ENCODE measurements at regions of chr11 and their contacts with region 1.

Region 1: DNA sequence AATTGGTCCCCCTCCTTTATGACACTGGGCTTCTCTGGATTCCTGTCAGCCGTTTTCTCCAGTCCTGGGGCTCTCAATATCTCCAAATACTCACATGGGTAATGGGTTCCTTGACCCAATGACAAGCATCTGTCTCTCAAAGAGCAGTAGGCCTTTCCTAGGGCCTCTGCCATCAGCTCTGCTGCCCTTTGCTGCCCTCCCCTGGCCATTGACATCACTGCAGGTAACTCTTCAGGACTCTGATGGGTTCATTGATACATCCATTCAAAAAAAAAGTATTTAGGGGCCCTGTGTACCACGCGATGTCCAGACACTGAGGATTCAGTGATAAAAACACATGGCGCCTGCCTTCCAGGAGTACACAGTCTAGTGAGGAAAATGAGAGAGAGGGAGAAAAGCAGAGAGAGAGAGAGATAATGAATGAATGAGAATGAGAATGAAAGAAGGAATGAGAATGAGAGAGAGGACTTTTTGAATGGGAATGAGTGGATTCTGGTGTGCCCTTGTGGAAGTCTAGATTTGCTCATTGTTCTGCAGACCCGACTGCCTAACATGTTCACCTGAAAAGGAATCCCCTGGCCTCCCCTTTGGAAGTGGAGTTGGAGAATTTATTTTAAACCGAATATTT is 42.6 kb upstream of the OLFML1 start:
- DNase-seq: peak; percentile 40
- H3K4me3 ChIP-seq: no peak overlapping the region
- H3K27ac ChIP-seq: no peak overlapping the region
- H3K4me1 ChIP-seq: peaks cover 7% of the 10 kb centered on the region
- H3K27me3 ChIP-seq: no peaks in the 10 kb centered on the region
- CTCF ChIP-seq: peak; percentile 96

Region 2: GRCh38 chr11:6988506-6988905 is 454.2 kb before region 1 on chr11:
- CTCF ChIA-PET with region 1: no interaction called
- dilution Hi-C with region 1: no loop called
- in situ Hi-C with region 1: no loop called
- intact Hi-C with region 1: no loop called
- DNase-seq: no peak
- H3K4me3 ChIP-seq: no peak overlapping the region
- H3K27ac ChIP-seq: no peak overlapping the region
- H3K4me1 ChIP-seq: no peaks in the 10 kb centered on the region
- H3K27me3 ChIP-seq: no peaks in the 10 kb centered on the region
- CTCF ChIP-seq: no peak

Region 3: DNA sequence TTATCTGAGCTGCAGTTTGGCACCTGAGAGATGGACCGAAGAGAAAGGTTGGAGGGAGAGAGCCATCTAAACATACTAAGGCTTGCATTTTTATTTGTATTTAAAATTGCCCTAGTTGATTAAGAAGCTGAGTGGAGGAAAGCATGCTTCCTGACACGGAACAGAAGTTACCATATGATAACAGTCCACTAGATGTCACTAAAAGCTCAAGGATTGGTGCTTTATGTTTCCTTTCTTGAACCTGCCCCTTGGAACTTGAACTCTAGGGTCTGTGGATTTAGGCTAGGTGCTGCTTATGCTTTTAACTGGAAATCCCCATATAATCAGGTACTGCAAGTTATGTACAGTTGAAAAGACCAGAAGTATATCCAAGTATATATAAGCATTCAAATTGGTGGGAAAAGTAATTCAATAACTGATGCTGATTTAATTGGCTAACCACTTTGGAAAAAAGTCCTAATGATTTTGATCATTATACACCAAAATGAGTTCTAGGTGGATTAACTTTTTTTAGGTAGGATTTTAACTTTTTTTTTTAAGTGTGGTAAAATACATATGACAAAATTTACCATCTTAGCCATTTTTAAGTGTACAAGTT is 344.4 kb before region 1 on chr11:
- CTCF ChIA-PET with region 1: no interaction called
- dilution Hi-C with region 1: no loop called
- in situ Hi-C with region 1: loop called (anchors 25 kb)
- intact Hi-C with region 1: loop called (anchors 1 kb)
- DNase-seq: peak; percentile 25
- H3K4me3 ChIP-seq: no peak overlapping the region
- H3K27ac ChIP-seq: no peak overlapping the region
- H3K4me1 ChIP-seq: no peaks in the 10 kb centered on the region
- H3K27me3 ChIP-seq: no peaks in the 10 kb centered on the region
- CTCF ChIP-seq: peak; percentile 61 to 68

Region 4: DNA sequence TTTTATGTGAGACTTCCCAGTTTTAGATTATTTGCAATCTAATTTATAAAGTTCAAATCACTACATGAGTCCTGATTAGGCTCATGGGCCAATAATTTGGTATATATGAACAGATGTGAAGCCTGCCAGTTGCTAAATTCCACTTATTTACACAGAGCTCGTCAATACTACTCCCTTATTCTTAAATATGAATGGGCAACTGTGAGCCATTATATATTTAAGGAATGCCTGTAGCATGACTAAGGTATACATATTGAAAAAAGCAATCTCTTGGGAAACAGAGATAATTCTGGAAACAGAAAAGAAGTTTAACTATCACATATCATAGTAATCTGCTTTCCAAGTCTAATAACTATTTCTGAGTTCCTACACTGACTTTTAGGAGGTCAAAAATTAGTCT is 326.9 kb before region 1 on chr11:
- CTCF ChIA-PET with region 1: no interaction called
- dilution Hi-C with region 1: no loop called
- in situ Hi-C with region 1: loop called (anchors 25 kb)
- intact Hi-C with region 1: no loop called
- DNase-seq: no peak
- H3K4me3 ChIP-seq: no peak overlapping the region
- H3K27ac ChIP-seq: no peak overlapping the region
- H3K4me1 ChIP-seq: no peaks in the 10 kb centered on the region
- H3K27me3 ChIP-seq: peaks cover 2% of the 10 kb centered on the region
- CTCF ChIP-seq: no peak

Region 5: DNA sequence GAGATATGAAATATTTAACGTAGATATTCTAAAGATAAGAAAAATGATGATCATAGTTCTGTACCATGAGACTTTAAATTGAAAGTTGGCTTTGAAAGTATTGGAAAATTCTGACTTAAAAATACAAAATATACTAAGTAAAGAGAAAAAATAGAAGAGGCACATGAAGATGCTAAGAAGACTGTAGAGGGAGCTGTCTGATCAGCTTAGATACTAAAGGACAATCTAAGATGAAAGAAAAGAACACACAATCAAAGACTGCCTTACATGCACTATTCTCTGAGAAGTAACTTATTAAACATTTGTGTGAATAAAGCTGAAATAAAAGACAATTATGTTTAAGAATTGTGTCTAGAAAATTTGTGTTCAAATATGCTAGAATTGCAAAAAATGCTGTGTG is 298.8 kb before region 1 on chr11:
- CTCF ChIA-PET with region 1: interaction called, 3 read pairs
- dilution Hi-C with region 1: no loop called
- in situ Hi-C with region 1: no loop called
- intact Hi-C with region 1: loop called (anchors 1 kb)
- DNase-seq: peak; percentile 6
- H3K4me3 ChIP-seq: no peak overlapping the region
- H3K27ac ChIP-seq: no peak overlapping the region
- H3K4me1 ChIP-seq: no peaks in the 10 kb centered on the region
- H3K27me3 ChIP-seq: no peaks in the 10 kb centered on the region
- CTCF ChIP-seq: peak; percentile 43 to 51

Region 6: GRCh38 chr11:7278314-7278917 is 164.3 kb before region 1 on chr11:
- CTCF ChIA-PET with region 1: no interaction called
- dilution Hi-C with region 1: no loop called
- in situ Hi-C with region 1: no loop called
- intact Hi-C with region 1: loop called (anchors 5 kb)
- DNase-seq: peak; percentile 15
- H3K4me3 ChIP-seq: no peak overlapping the region
- H3K27ac ChIP-seq: no peak overlapping the region
- H3K4me1 ChIP-seq: peaks cover 5% of the 10 kb centered on the region
- H3K27me3 ChIP-seq: no peaks in the 10 kb centered on the region
- CTCF ChIP-seq: peak; percentile 68 to 78

Region 7: GRCh38 chr11:7353100-7353499 is 89.6 kb before region 1 on chr11:
- CTCF ChIA-PET with region 1: interaction called, 4 read pairs
- dilution Hi-C with region 1: no loop called
- in situ Hi-C with region 1: no loop called
- intact Hi-C with region 1: loop called (anchors 1 kb)
- DNase-seq: peak; percentile 24
- H3K4me3 ChIP-seq: no peak overlapping the region
- H3K27ac ChIP-seq: no peak overlapping the region
- H3K4me1 ChIP-seq: no peaks in the 10 kb centered on the region
- H3K27me3 ChIP-seq: peaks cover 3% of the 10 kb centered on the region
- CTCF ChIP-seq: peak; percentile 67 to 75

Region 8: GRCh38 chr11:7665473-7666291 is 223.0 kb after region 1 on chr11:
- CTCF ChIA-PET with region 1: no interaction called
- dilution Hi-C with region 1: no loop called
- in situ Hi-C with region 1: no loop called
- intact Hi-C with region 1: loop called (anchors 2 kb)
- DNase-seq: peak; percentile 75
- H3K4me3 ChIP-seq: no peak overlapping the region
- H3K27ac ChIP-seq: no peak overlapping the region
- H3K4me1 ChIP-seq: peaks cover 23% of the 10 kb centered on the region
- H3K27me3 ChIP-seq: no peaks in the 10 kb centered on the region
- CTCF ChIP-seq: peak; percentile 89 to 96